Activated CD4-positive, alpha-beta memory T cell treated with anti-CD3 and anti-CD28 coated beads, Interleukin-2, amount 10 ng/mL, durations not matched to agents 7 days and 5 days (primary cell): ENCODE measurements at regions of chr14 and their contacts with region 1.

Region 1: DNA sequence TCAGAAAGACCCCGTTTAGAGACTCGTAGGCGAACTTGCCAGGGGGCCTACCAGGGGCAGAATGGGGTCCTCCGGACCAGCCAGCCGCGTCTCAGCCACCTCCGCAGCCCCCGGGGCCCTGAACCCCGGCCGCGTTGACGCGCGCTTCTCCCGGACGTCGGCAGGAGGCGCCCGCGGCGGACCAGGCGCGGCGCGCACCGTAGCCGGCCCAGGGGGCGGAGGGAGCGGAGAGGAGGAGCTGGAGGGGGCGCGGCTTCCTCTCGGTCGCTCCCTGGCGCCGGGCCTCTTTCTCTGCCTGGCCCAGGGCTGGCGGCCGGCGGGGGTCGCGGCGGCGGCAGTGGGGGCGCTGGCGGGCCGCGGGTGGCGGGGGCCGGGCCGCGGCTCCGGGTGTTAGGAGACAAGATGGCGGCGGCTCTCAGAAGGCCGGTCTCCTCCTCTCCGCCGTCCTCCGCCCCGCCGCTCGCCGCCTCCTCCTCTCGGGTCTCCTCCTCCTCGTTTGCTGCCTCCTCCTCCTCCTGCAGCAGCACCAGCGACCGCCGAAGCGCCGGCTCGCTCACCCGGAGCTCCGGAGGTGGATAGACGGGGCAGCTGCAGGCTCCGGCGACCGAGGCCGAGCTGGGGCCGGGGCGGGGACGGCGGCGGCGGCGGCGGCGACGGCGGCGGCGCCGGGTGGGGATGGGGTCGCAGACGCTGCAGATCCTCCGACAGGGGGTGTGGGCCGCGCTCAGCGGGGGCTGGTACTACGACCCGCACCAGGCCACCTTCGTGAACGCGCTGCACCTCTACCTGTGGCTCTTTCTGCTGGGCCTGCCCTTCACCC is at the start of gene PCNX1:
- DNase-seq: peak; percentile 90
- H3K4me3 Mint-ChIP-seq: peak within 1 kb of the TSS; percentile 81
- H3K27ac Mint-ChIP-seq: peak within 1 kb of the TSS; percentile 86
- H3K4me1 Mint-ChIP-seq: peaks cover 60% of the 10 kb centered on the region
- H3K27me3 Mint-ChIP-seq: peaks cover 8% of the 10 kb centered on the region
- total RNA-seq, gene PCNX1: 56.9 to 60.4 TPM

Region 2: DNA sequence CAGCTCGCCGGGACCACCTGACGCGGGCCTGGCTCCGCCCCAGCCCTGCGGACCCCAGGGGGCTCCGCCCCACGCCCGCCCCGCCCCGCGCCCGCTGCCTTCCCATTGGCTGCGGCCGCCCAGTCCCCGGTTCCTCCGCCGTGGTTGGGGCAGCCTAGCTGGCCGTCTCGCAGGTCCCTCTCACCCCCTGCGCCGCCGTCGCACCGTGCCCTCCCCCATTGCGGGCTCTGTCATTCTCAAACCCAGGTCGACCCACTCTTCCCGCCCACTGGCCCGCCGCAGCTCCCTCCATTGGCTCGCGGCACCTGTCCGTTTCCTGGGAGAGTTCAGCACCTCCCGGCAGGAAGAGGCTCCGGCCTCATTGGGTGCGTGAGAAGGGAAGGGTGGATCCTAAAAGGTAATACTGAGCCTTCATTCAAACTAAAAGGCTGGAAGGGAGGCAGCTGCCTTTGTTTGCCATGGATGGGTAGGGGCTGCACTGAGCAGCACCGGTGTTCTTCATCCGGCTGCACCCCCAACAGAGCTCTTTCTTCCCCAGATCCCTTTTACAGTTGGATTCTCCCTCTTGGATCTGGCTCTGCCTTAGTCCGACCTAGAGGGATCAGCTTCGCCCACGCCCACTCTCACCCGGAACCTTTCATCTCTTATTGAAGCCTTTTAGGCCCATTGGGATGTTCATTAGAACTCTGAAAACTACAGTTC is 97.7 kb before region 1 on chr14:
- CTCF ChIA-PET with region 1: interaction called, 15 read pairs
- POLR2A ChIA-PET with region 1: interaction called, 6 read pairs
- DNase-seq: peak; percentile 93
- H3K4me3 Mint-ChIP-seq: no peak overlapping the region
- H3K27ac Mint-ChIP-seq: peak overlapping the region; percentile 63
- H3K4me1 Mint-ChIP-seq: peaks cover 11% of the 10 kb centered on the region
- H3K27me3 Mint-ChIP-seq: peaks cover 10% of the 10 kb centered on the region

Region 3: DNA sequence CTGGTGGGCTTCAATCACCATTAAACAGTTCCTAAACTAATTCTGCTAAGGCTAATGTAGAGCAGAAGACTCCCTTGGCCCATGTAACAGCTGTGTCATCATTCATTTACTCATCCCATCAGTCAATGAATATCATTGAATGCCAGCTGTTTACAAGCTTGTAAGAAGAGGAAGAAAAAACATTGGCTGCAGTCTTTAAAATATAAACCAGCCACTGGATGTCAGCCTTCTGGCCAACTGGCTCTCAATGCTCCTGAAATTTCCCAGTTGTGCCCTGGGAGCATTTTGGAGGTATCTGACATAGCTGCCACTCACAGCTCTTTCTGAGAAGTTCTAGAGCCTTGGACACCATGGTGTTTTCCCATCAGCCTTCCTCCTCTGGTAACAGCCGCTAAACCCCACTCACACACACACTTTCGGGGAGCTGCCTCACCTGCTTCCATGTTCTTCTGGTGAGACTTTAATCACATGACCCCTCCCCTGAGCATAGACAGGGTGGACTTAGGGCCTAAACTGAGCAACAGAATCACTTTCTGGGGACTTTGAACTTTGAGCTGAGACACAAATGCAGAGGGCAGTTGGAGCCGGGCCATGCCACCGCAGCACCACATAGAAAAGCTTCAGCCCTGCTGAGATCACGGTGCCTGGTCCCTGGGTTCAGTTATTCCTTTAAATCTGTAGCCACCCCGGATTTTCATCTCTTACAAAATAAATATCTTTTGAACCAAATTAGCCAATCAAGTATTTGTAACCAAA is 79.8 kb before region 1 on chr14:
- CTCF ChIA-PET with region 1: interaction called, 20 read pairs
- POLR2A ChIA-PET with region 1: interaction called, 26 read pairs
- DNase-seq: no peak
- H3K4me3 Mint-ChIP-seq: no peak overlapping the region
- H3K27ac Mint-ChIP-seq: no peak overlapping the region
- H3K4me1 Mint-ChIP-seq: peaks cover 10% of the 10 kb centered on the region
- H3K27me3 Mint-ChIP-seq: peaks cover 20% of the 10 kb centered on the region

Region 4: GRCh38 chr14:70887207-70887681 is 20.1 kb before region 1 on chr14:
- CTCF ChIA-PET with region 1: interaction called, 67 read pairs
- POLR2A ChIA-PET with region 1: interaction called, 91 read pairs
- DNase-seq: no peak
- H3K4me3 Mint-ChIP-seq: peak overlapping the region; percentile 68
- H3K27ac Mint-ChIP-seq: peak overlapping the region; percentile 94
- H3K4me1 Mint-ChIP-seq: peaks cover 92% of the 10 kb centered on the region
- H3K27me3 Mint-ChIP-seq: peaks cover 2% of the 10 kb centered on the region

Region 5: GRCh38 chr14:70942342-70942706 is 34.9 kb after region 1 on chr14:
- CTCF ChIA-PET with region 1: interaction called, 24 read pairs
- POLR2A ChIA-PET with region 1: interaction called, 22 read pairs
- DNase-seq: no peak
- H3K4me3 Mint-ChIP-seq: no peak overlapping the region
- H3K27ac Mint-ChIP-seq: peak overlapping the region; percentile 70
- H3K4me1 Mint-ChIP-seq: peaks cover 57% of the 10 kb centered on the region
- H3K27me3 Mint-ChIP-seq: no peaks in the 10 kb centered on the region

Region 6: GRCh38 chr14:70999117-70999516 is 91.7 kb after region 1 on chr14:
- CTCF ChIA-PET with region 1: interaction called, 13 read pairs
- POLR2A ChIA-PET with region 1: interaction called, 6 read pairs
- DNase-seq: no peak
- H3K4me3 Mint-ChIP-seq: peak overlapping the region; percentile 12
- H3K27ac Mint-ChIP-seq: peak overlapping the region; percentile 41
- H3K4me1 Mint-ChIP-seq: peaks cover 51% of the 10 kb centered on the region
- H3K27me3 Mint-ChIP-seq: no peaks in the 10 kb centered on the region